Psoas muscle (tissue), 8 donors: ENCODE measurements at regions of chr12 and their contacts with region 1.

Region 1: DNA sequence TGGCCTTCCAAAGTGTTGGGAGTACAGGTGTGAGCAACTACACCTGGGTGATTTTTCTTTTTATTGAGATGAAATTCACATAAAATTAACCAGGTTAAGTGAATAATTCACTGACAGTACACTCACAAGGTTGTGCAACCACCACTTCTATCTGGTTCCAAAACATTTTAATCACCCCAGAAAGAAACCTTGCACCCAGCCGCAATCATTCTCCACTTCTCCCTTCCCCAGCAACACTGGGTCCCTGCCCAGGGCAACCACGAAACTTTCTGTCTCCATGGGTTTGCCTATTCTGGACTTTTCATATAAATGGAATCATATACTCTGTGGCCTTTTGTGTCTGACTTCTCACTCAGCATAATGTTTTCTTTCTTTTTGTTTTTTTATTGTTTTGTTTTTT is 26.3 kb upstream of the MLXIP start:
- DNase-seq: no peak
- ATAC-seq: no peak
- H3K4me3 ChIP-seq: no peak overlapping the region
- H3K27ac ChIP-seq: peak overlapping the region; percentile 91
- H3K4me1 ChIP-seq: peaks cover 33% of the 10 kb centered on the region
- H3K27me3 ChIP-seq: no peaks in the 10 kb centered on the region
- CTCF ChIP-seq: no peak

Region 2: DNA sequence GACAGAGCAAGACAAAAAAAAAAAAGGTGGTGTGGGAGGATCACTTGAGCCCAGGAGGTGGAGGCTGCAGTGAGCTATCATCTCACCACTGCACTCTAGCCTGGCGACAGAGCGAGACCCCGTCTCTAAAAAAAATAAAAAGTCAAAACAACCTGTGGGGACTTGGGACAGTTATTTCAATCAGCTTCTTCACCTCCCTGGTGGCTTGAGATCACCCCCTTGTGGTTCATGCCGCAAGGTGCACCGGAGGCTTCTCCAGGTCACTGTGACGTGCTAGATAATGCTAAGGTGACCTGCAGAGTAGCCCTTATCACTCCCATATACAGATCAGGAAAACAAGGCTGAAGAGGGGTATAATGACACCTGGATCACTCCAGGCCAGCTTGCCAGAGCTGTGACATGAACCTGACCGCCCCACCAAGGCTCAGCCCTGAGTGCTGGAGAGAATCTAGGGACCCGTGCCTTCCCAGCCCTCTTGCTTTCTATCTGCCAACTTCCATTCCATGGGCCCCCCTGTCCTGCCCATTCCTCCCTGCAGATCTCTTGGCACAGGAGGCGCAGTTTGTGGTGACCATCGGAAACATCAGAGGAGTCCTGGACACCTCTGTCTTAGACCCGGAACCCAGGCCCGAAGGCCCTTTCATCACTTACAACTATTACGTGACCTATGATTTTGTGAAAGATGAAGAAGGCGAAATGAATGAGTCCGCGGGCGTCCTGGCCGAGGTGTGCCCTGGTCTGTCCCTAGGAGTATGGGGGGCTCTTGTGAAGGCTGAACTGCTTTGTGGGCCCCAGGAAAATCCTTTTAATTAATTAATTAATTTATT is 138.8 kb after region 1 on chr12:
- intact Hi-C with region 1: loop called (anchors 2 to 5 kb)
- DNase-seq: peak; percentile 57 to 80
- ATAC-seq: peak; percentile 87 to 96 (median 93)
- H3K4me3 ChIP-seq: no peak overlapping the region
- H3K27ac ChIP-seq: no peak overlapping the region
- H3K4me1 ChIP-seq: no peaks in the 10 kb centered on the region
- H3K27me3 ChIP-seq: no peaks in the 10 kb centered on the region
- CTCF ChIP-seq: peak; percentile 83

Region 3: GRCh38 chr12:122197612-122197966 is 145.3 kb after region 1 on chr12:
- intact Hi-C with region 1: loop called in 1 of 2 experiments (anchors 5 kb)
- DNase-seq: no peak
- ATAC-seq: peak in 1 of 4 donors; percentile 46
- H3K4me3 ChIP-seq: no peak overlapping the region
- H3K27ac ChIP-seq: no peak overlapping the region
- H3K4me1 ChIP-seq: peaks cover 7% of the 10 kb centered on the region
- H3K27me3 ChIP-seq: peaks cover 0 to 21% (median 4%) of the 10 kb centered on the region in 3 donors
- CTCF ChIP-seq: no peak